ENCODE measurements at regions of chr6 and their contacts with region 1.

Region 1: GRCh38 chr6:165676435-165677068 is 13.5 kb upstream of the PDE10A start:
- DNase-seq: peak; percentile 89
- H3K4me3 ChIP-seq: no peak overlapping the region
- H3K27ac ChIP-seq: peak overlapping the region; percentile 25
- H3K4me1 ChIP-seq: peaks cover 9% of the 10 kb centered on the region
- H3K27me3 ChIP-seq: no peaks in the 10 kb centered on the region
- CTCF ChIP-seq: peak; percentile 32 to 68
- POLR2A ChIP-seq: no peak

Region 2: DNA sequence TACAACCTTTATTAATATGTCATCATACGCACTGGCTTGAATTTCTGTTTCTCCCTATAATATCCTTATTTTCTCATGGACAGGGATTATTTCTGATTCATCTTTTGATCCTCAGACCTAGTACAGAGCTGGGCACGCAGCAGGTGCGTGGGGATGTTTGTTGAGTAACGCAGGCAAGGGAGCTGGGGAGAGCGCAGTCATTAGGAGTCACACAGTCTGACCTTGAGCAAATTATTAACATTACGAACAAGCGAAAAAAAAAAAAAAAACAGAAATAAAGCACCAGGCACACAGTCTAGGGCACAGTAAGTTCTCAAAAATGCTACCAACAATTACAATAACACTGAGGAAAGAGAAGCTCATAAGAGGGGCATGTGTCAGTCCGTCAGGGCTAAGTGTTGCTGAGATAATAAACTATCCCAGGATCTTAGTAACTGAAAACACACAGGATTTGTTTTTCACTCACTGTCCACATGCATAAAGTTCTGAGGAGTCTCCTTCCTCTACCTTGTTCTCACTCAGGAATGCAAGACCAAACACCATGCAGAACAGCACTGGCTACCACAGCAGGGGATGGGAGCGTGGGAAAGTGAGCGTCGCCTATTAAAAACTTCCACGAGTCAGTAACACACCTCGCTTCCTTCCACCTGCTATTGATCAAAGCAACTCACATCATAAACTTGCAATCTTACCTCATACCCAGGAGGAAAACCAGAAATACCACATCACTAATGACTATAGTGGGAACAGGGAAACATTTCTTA is 70.5 kb before region 1 on chr6:
- CTCF ChIA-PET with region 1: no interaction called
- POLR2A ChIA-PET with region 1: no interaction called
- dilution Hi-C with region 1: no loop called
- intact Hi-C with region 1: no loop called
- DNase-seq: no peak
- H3K4me3 ChIP-seq: no peak overlapping the region
- H3K27ac ChIP-seq: no peak overlapping the region
- H3K4me1 ChIP-seq: no peaks in the 10 kb centered on the region
- H3K27me3 ChIP-seq: no peaks in the 10 kb centered on the region
- CTCF ChIP-seq: no peak
- POLR2A ChIP-seq: no peak

Region 3: GRCh38 chr6:165636402-165637048 is 40.0 kb before region 1 on chr6:
- CTCF ChIA-PET with region 1: interaction called, 12 read pairs
- POLR2A ChIA-PET with region 1: no interaction called
- dilution Hi-C with region 1: no loop called
- intact Hi-C with region 1: no loop called
- DNase-seq: peak; percentile 64
- H3K4me3 ChIP-seq: no peak overlapping the region
- H3K27ac ChIP-seq: no peak overlapping the region
- H3K4me1 ChIP-seq: no peaks in the 10 kb centered on the region
- H3K27me3 ChIP-seq: peaks cover 0 to 2% of the 10 kb centered on the region in 2 experiments
- CTCF ChIP-seq: no peak
- POLR2A ChIP-seq: no peak

Region 4: DNA sequence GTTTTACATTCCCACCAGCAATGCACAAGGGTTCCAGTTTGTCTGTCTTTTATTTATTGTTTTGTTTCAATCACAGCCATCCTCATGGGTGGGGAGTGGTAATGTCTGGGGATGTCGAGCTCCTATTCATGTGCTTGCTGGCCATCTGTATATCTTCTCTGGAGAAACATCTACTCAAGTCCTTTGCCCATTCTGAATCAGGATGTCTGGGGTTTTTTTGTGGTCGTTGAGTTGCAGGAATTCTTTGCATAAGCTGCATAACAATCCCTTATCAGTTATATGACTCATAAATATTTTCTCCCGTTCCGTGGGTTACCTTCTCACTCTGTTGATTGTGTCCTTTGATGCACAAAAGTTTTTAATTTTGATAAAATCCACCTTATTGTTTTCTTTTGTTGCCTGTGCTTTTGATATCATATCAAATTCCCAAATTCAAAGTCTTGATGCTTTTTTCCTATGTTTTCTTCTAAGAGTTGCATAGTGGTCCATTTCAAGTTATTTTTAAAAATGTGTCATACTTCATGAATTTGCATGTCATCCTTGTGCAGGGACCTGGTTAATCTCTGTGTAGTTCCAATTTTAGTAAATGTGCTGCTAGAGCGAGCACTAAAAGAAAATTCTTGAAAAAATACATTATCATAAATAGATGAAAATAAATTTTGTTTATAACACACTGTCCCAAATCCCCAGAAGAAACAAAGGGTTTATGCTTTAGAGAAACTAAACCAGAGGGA is 41.3 kb after region 1 on chr6:
- CTCF ChIA-PET with region 1: interaction called, 4 read pairs
- POLR2A ChIA-PET with region 1: no interaction called
- dilution Hi-C with region 1: no loop called
- intact Hi-C with region 1: loop called (anchors 1 kb)
- DNase-seq: peak; percentile 53
- H3K4me3 ChIP-seq: no peak overlapping the region
- H3K27ac ChIP-seq: no peak overlapping the region
- H3K4me1 ChIP-seq: peaks cover 5% of the 10 kb centered on the region
- H3K27me3 ChIP-seq: peaks cover 0 to 2% of the 10 kb centered on the region in 2 experiments
- CTCF ChIP-seq: no peak
- POLR2A ChIP-seq: no peak

Region 5: DNA sequence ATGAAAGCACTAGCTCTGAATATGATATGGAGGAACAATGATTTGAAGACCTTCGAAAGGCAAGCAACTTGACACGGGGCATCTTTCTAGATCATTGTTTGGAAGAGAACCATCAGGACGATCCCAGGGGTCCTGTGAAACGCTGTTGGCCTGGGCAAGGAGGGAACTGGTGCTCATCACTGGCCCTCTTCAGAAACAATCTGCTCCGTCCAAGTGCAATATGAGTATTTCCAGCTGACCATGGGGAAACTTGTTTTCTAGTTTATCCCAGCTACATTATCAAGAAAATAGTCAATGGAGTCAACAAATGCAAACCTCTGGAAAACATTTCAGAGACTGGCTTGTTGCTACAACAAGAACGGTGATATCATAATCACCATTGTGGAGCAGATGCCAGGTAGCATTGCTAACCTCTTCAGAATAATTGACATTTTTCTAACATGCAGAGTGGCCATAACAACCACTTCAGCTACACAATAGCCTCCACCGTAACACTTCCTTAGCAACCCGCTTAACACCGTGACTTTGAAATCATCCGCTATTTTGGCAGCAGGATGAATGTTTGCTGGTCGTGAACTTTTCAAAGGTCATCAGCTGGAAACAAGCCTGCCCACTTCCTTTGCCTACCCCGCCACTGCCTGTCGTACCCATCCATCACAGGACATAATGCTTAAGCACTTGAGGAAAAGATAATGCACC is 98.5 kb after region 1 on chr6:
- CTCF ChIA-PET with region 1: interaction called, 5 read pairs
- POLR2A ChIA-PET with region 1: no interaction called
- dilution Hi-C with region 1: no loop called
- intact Hi-C with region 1: loop called (anchors 2 kb)
- DNase-seq: peak; percentile 99
- H3K4me3 ChIP-seq: peak overlapping the region in 1 of 3 experiments; percentile 5
- H3K27ac ChIP-seq: peak overlapping the region; percentile 92
- H3K4me1 ChIP-seq: peaks cover 12% of the 10 kb centered on the region
- H3K27me3 ChIP-seq: peaks cover 0 to 1% of the 10 kb centered on the region in 2 experiments
- CTCF ChIP-seq: no peak
- POLR2A ChIP-seq: no peak

Region 6: DNA sequence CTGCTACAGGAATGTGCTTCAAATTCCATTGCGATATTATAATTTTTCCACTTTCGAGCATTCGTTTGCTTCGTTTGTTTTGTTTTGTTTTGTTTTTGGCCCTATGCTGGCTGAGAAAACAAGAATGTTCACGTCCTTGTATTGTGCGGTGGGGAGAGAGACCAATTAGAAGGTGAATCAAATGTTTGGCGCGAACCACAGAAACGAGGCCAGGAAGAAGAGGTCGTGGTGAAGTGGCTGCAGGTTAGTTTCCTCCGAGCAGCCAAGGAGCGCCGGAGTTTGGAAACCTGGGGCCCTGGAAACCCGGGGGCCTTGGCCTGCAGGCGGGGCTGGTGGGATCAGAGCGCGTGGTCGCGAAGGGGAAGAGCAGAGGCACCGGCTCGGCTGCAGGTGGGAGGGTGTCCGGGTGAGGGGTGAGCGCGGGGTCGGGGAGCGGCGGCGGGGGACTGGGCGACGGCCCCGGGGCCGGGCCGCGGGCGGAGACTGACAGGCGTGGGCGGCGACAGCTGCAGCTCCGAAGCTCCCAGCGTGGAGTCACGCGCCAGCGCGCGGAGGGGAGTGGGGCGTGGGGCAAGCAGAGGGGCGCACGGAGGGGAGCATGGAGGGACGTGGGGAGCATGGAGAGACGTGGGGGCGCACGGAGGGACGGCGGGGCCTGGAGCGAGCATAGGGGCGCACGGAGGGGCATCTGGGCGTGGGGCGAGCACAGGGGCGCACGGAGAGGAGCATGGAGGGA is 127.9 kb after region 1 on chr6:
- CTCF ChIA-PET with region 1: no interaction called
- POLR2A ChIA-PET with region 1: no interaction called
- dilution Hi-C with region 1: no loop called
- intact Hi-C with region 1: no loop called
- DNase-seq: peak; percentile 2
- H3K4me3 ChIP-seq: peak overlapping the region in 1 of 3 experiments; percentile 25
- H3K27ac ChIP-seq: no peak overlapping the region
- H3K4me1 ChIP-seq: no peaks in the 10 kb centered on the region
- H3K27me3 ChIP-seq: peaks cover 3 to 13% of the 10 kb centered on the region in 2 experiments
- CTCF ChIP-seq: no peak
- POLR2A ChIP-seq: no peak

Region 7: DNA sequence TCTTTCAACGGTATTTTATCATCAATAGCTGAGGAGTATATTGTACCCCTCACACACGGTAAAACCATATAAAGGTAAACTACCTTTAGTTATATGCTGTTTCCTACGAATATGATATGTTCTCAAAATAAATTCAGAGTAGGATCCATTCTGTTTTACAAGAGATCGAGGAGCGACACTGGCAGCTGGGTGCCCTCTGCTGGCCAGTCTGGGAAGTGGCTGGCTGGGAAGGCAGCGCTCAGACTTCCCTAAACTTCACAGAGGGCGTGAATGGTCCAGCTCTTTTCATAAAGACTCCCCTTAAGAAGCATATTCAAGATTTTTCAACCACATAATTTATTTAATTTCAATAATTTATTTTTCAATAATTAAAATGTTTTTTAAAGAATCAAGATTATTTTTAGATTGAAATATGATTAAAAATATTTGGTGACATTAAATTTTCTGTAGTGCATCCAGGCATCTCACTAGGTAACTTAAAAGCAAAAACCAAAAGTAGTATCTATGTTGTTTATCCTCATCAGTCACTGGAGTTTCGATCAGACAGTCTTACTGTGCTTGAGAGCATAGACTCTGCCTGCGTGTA is 174.0 kb after region 1 on chr6:
- CTCF ChIA-PET with region 1: interaction called, 13 read pairs
- POLR2A ChIA-PET with region 1: no interaction called
- dilution Hi-C with region 1: no loop called
- intact Hi-C with region 1: no loop called
- DNase-seq: peak; percentile 62
- H3K4me3 ChIP-seq: no peak overlapping the region
- H3K27ac ChIP-seq: no peak overlapping the region
- H3K4me1 ChIP-seq: no peaks in the 10 kb centered on the region
- H3K27me3 ChIP-seq: peaks cover 10 to 23% of the 10 kb centered on the region in 2 experiments
- CTCF ChIP-seq: peak; percentile 92 to 94
- POLR2A ChIP-seq: no peak

Measured in endothelial cell of umbilical vein (primary cell).